SK-N-SH (cell line): ENCODE measurements at regions of chr4 and their contacts with region 1.

Region 1: GRCh38 chr4:48578132-48578968 is 88.3 kb downstream of the ZAR1 start:
- DNase-seq: peak; percentile 59
- H3K4me3 ChIP-seq: no peak overlapping the region; a peak in 1 of 4 replicates
- H3K27ac ChIP-seq: no peak overlapping the region
- H3K4me1 ChIP-seq: no peaks in the 10 kb centered on the region
- H3K27me3 ChIP-seq: no peaks in the 10 kb centered on the region
- CTCF ChIP-seq: peak; percentile 87
- EP300 ChIP-seq: no peak
- RAD21 ChIP-seq: peak; percentile 94

Region 2: GRCh38 chr4:48564151-48564550 is 14.2 kb before region 1 on chr4:
- CTCF ChIA-PET with region 1: interaction called, 12 read pairs
- POLR2A ChIA-PET with region 1: no interaction called
- DNase-seq: no peak
- H3K4me3 ChIP-seq: no peak overlapping the region
- H3K27ac ChIP-seq: no peak overlapping the region
- H3K4me1 ChIP-seq: peaks cover 0 to 7% of the 10 kb centered on the region in 2 experiments; a peak in 1 of 4 replicates
- H3K27me3 ChIP-seq: no peaks in the 10 kb centered on the region
- CTCF ChIP-seq: no peak
- EP300 ChIP-seq: no peak
- RAD21 ChIP-seq: no peak

Region 3: GRCh38 chr4:48596336-48596735 is 18.0 kb after region 1 on chr4:
- CTCF ChIA-PET with region 1: interaction called, 16 read pairs
- POLR2A ChIA-PET with region 1: no interaction called
- DNase-seq: no peak
- H3K4me3 ChIP-seq: no peak overlapping the region
- H3K27ac ChIP-seq: no peak overlapping the region
- H3K4me1 ChIP-seq: no peaks in the 10 kb centered on the region; a peak in 2 of 4 replicates
- H3K27me3 ChIP-seq: no peaks in the 10 kb centered on the region
- CTCF ChIP-seq: no peak
- EP300 ChIP-seq: no peak
- RAD21 ChIP-seq: no peak

Region 4: GRCh38 chr4:48620831-48621230 is 42.5 kb after region 1 on chr4:
- CTCF ChIA-PET with region 1: interaction called, 11 read pairs
- POLR2A ChIA-PET with region 1: no interaction called
- DNase-seq: no peak
- H3K4me3 ChIP-seq: no peak overlapping the region
- H3K27ac ChIP-seq: no peak overlapping the region
- H3K4me1 ChIP-seq: peaks cover 0 to 5% of the 10 kb centered on the region in 2 experiments; a peak in 3 of 4 replicates
- H3K27me3 ChIP-seq: no peaks in the 10 kb centered on the region
- CTCF ChIP-seq: no peak
- EP300 ChIP-seq: no peak
- RAD21 ChIP-seq: no peak

Region 5: DNA sequence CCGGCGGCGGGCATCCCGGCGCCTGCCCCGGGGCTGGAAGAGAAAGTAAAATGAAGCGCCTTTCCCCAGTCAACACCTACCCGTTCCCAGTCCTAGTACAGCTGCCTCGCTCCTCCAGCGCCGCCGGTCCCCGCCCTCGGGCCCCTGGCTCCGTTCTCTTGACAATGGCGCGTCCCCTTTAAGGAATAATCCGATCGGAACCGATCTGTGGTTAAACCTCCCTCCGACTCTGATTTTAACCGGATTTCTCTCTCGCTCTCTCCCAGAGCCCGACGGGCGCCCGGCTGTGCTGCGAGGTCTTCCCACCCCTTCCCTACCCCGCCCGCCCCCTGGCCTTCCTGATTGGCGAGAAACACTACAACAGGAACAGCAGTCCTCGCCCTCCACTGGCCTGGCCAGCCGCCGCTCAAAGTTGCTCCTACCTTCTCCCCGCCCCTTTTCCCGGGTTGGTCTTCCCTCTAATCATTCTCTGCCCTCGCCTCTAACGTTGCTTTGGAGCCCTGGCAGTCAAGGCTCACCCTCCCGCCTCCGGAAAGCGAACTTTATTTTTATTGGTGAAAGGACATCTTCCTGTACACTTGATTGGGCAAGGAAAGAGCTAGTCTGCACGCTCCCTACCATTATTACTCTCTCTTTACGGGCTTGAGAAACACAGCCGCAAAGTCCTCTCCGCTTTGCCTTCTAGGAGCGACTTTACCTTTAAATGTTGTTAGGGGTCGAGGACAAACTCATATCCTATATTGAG is 201.8 kb after region 1 on chr4 and contains the start of gene FRYL:
- CTCF ChIA-PET with region 1: interaction called, 32 read pairs
- POLR2A ChIA-PET with region 1: no interaction called
- DNase-seq: peak; percentile 91
- H3K4me3 ChIP-seq: peak within 1 kb of the TSS; percentile 92
- H3K27ac ChIP-seq: peak within 1 kb of the TSS; percentile 93 to 94
- H3K4me1 ChIP-seq: peaks cover 16 to 17% of the 10 kb centered on the region in 2 experiments; a peak in 3 of 4 replicates
- H3K27me3 ChIP-seq: no peaks in the 10 kb centered on the region
- CTCF ChIP-seq: no peak
- EP300 ChIP-seq: no peak
- RAD21 ChIP-seq: peak; percentile 9; the same call in 1 of the 2 replicates
- polyA plus RNA-seq, gene FRYL: 8.2 and 10.2 TPM in 2 replicates

Region 6: GRCh38 chr4:48906206-48907173 is 328.1 kb after region 1 on chr4 and contains the start of gene OCIAD2:
- CTCF ChIA-PET with region 1: interaction called, 11 read pairs
- POLR2A ChIA-PET with region 1: interaction called, 5 read pairs
- DNase-seq: peak; percentile 89
- H3K4me3 ChIP-seq: peak within 1 kb of the TSS; percentile 64 to 82
- H3K27ac ChIP-seq: peak within 1 kb of the TSS; percentile 72 to 80; a peak in 2 of 4 replicates
- H3K4me1 ChIP-seq: peaks cover 17 to 31% of the 10 kb centered on the region in 2 experiments
- H3K27me3 ChIP-seq: no peaks in the 10 kb centered on the region
- CTCF ChIP-seq: no peak; the same call in 1 of the 2 replicates
- EP300 ChIP-seq: no peak
- RAD21 ChIP-seq: peak; percentile 53
- polyA plus RNA-seq, gene OCIAD2: 235 and 387 TPM in 2 replicates

Region 7: GRCh38 chr4:48963042-48963679 is 384.8 kb after region 1 on chr4:
- CTCF ChIA-PET with region 1: interaction called, 23 read pairs
- POLR2A ChIA-PET with region 1: no interaction called
- DNase-seq: peak; percentile 60
- H3K4me3 ChIP-seq: no peak overlapping the region; a peak in 1 of 4 replicates
- H3K27ac ChIP-seq: no peak overlapping the region
- H3K4me1 ChIP-seq: no peaks in the 10 kb centered on the region
- H3K27me3 ChIP-seq: no peaks in the 10 kb centered on the region
- CTCF ChIP-seq: peak; percentile 100
- EP300 ChIP-seq: no peak
- RAD21 ChIP-seq: peak; percentile 97